ENCODE measurements at regions of chr19 and their contacts with region 1.

Region 1: DNA sequence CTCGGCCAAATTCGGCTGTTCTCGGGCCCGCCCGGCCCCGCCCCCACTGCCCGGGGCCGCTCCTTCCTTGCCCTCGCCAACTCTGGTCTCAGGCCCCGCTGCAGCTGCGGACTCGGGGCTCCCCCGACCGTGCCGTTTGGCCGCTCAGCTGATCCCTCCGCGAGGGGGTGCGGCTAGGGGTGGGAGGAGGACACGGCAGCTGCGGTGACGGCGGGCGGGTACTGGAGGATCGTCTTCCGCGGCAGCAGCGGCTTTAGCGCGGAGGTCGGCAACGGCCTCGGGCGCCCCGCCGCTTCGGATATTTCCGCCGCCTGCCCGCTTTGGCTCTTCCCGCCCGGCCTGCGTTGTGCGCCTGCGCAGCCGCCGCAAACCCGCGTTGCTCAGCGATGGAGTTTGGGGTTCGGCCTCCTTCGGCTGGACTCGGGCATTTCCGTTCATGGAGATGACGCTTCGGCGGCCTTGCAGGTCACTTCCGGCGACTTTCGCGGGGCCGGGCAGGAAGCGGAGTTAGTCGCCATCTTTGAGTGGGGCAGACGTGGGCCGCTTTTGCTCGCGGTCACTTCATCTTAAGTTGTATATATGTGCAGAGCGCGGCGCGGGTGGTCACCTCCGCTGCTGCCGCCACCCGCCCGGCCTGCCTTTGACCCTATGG is 338 bp upstream of the UBE2M start:
- DNase-seq: peak; percentile 80 to 99 (median 86)
- ATAC-seq: peak; percentile 79
- H3K4me3 ChIP-seq: peak overlapping the region; percentile 92
- H3K27ac ChIP-seq: peak overlapping the region; percentile 94
- H3K4me1 ChIP-seq: peaks cover 33 to 74% of the 10 kb centered on the region in 2 experiments
- H3K27me3 ChIP-seq: no peaks in the 10 kb centered on the region
- CTCF ChIP-seq: no peak
- EP300 ChIP-seq: no peak
- POLR2A ChIP-seq: no peak
- RAD21 ChIP-seq: no peak

Region 2: GRCh38 chr19:58416604-58417003 is 142.1 kb before region 1 on chr19:
- CTCF ChIA-PET with region 1: no interaction called
- POLR2A ChIA-PET with region 1: no interaction called
- in situ Hi-C with region 1: no loop called
- intact Hi-C with region 1: no loop called
- DNase-seq: no peak
- ATAC-seq: no peak
- H3K4me3 ChIP-seq: no peak overlapping the region
- H3K27ac ChIP-seq: no peak overlapping the region
- H3K4me1 ChIP-seq: no peaks in the 10 kb centered on the region
- H3K27me3 ChIP-seq: no peaks in the 10 kb centered on the region
- CTCF ChIP-seq: no peak
- EP300 ChIP-seq: no peak
- POLR2A ChIP-seq: no peak
- RAD21 ChIP-seq: no peak

Region 3: DNA sequence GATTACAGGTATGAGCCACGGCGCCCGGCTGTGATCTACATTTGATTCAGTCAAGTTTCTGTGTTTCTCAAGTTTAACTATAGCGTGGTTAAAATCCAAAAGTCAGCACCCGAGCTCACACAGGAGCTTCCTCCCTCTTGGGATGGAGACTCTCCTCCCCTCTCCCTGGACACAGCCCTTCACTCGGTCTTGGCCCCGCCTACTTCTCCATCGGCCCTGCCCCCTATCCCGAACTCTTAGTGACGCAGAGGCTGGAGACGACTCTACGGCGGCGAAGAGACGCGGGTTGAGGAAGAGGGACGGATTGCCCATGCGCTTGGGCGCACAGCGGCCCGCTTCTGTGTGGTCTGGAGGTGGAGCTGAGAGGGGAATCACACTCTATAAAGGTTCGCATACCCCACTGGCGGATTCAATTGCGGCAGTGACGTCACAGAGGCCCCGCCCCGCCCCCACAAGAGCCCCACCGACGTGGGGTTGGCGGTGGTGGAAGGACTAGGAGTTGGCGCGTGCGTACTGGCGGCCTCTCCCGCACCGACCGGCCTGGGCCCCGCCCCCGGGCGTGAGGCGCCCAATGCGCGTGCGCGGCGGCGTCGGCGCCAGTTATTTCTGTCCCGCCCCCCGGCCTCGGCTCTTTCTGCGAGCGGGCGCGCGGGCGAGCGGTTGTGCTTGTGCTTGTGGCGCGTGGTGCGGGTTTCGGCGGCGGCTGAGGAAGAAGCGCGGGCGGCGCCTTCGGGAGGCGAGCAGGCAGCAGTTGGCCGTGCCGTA is 14.7 kb before region 1 on chr19 and contains the start of gene TRIM28:
- CTCF ChIA-PET with region 1: no interaction called
- POLR2A ChIA-PET with region 1: interaction called, 48 read pairs
- in situ Hi-C with region 1: no loop called
- intact Hi-C with region 1: no loop called
- DNase-seq: peak; percentile 97 to 100 (median 100)
- ATAC-seq: peak; percentile 96
- H3K4me3 ChIP-seq: peak within 1 kb of the TSS; percentile 100
- H3K27ac ChIP-seq: peak within 1 kb of the TSS; percentile 88
- H3K4me1 ChIP-seq: peaks cover 13 to 28% of the 10 kb centered on the region in 2 experiments; a peak in 4 of 5 replicates
- H3K27me3 ChIP-seq: no peaks in the 10 kb centered on the region
- CTCF ChIP-seq: no peak
- EP300 ChIP-seq: no peak
- POLR2A ChIP-seq: peak; percentile 92
- RAD21 ChIP-seq: no peak
- polyA plus RNA-seq, gene TRIM28: 12.1 to 29.3 TPM

Region 4: GRCh38 chr19:58572818-58573657 is 14.3 kb after region 1 on chr19 and contains the start of gene MZF1:
- CTCF ChIA-PET with region 1: no interaction called
- POLR2A ChIA-PET with region 1: interaction called, 24 read pairs
- in situ Hi-C with region 1: no loop called
- intact Hi-C with region 1: no loop called
- DNase-seq: peak; percentile 92 to 100 (median 94)
- ATAC-seq: peak; percentile 77
- H3K4me3 ChIP-seq: peak within 1 kb of the TSS; percentile 71
- H3K27ac ChIP-seq: peak within 1 kb of the TSS; percentile 99
- H3K4me1 ChIP-seq: peaks cover 25 to 35% of the 10 kb centered on the region in 2 experiments; a peak in 4 of 5 replicates
- H3K27me3 ChIP-seq: no peaks in the 10 kb centered on the region
- CTCF ChIP-seq: peak in 2 of 3 experiments; percentile 2 to 30; a peak in 1 of 6 replicates
- EP300 ChIP-seq: 0 out of 2 replicates have a peak, but pooled peaks have one; percentile 4
- POLR2A ChIP-seq: peak; percentile 87
- RAD21 ChIP-seq: no peak
- polyA plus RNA-seq, gene MZF1: 0.31 to 1.6 TPM